ENCODE measurements at regions of chr6 and their contacts with region 1.

Region 1: DNA sequence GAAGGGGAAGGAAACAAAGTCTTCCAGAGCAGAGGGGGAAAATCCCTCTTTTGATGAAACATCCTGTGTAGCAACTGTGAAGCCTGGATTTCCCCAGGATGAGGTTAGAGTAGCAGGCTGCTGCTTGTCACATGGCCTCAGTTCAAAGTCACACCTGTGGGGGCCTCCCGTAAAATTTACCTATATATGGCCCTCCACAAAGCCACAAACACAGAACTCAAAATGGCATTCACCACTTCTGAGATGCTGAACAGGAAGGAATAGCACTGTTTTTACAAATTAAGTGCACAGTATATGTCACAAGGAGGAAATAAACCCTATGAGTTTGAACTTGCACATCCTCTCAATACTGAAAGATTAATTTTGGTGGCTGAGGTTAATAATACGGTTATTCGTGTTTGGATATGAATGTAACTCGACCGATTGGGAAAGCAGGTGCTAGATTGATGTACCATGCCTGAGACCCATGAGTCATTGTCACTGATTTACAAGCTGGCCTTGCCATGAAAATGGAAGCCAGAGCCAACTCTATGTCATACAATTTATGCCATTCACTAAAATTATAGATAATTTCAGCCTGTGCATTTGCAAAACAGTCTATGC is 70.6 kb downstream of the SGK1 start:
- DNase-seq: peak; percentile 46 to 96 (median 58)
- ATAC-seq: peak; percentile 90
- H3K4me3 ChIP-seq: peak overlapping the region; percentile 6
- H3K4me3 Mint-ChIP-seq: peak overlapping the region; percentile 79
- H3K27ac ChIP-seq: peak overlapping the region; percentile 48 to 72
- H3K27ac Mint-ChIP-seq: peak overlapping the region; percentile 86
- H3K4me1 ChIP-seq: peaks cover 47% of the 10 kb centered on the region
- H3K4me1 Mint-ChIP-seq: peaks cover 65% of the 10 kb centered on the region
- H3K27me3 ChIP-seq: no peaks in the 10 kb centered on the region
- H3K27me3 Mint-ChIP-seq: no peaks in the 10 kb centered on the region
- CTCF ChIP-seq: no peak

Region 2: GRCh38 chr6:134201711-134202110 is 45.6 kb before region 1 on chr6:
- CTCF ChIA-PET with region 1: no interaction called
- POLR2A ChIA-PET with region 1: no interaction called
- intact Hi-C with region 1: no loop called
- DNase-seq: no peak
- ATAC-seq: no peak
- H3K4me3 ChIP-seq: no peak overlapping the region
- H3K4me3 Mint-ChIP-seq: no peak overlapping the region
- H3K27ac ChIP-seq: no peak overlapping the region
- H3K27ac Mint-ChIP-seq: no peak overlapping the region
- H3K4me1 ChIP-seq: peaks cover 4% of the 10 kb centered on the region
- H3K4me1 Mint-ChIP-seq: peaks cover 5% of the 10 kb centered on the region
- H3K27me3 ChIP-seq: no peaks in the 10 kb centered on the region
- H3K27me3 Mint-ChIP-seq: no peaks in the 10 kb centered on the region
- CTCF ChIP-seq: no peak

Region 3: DNA sequence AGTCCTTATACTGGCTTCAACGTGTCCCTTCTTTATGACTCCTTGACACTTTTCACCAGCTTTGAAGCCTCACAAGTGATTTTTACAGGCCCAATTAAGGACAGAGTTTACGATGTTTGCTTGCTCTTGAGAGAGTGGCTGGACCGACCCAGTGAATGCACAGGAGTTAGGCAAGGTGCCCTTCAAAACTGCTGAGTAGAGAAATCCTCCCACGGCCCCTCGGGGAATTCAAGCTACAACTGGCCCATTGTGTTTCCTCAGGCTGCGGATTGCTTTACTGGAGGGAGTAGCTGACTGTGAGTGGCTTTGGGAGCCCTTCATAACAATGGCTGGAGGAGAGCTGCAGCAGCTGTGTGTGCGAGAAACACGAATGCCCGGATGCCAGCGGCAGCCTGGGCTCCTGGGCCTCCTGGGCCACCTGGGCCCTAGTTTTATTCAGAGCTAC is 20.6 kb after region 1 on chr6:
- CTCF ChIA-PET with region 1: no interaction called
- POLR2A ChIA-PET with region 1: interaction called, 3 read pairs
- intact Hi-C with region 1: loop called in 1 of 2 experiments (anchors 2 kb)
- DNase-seq: no peak
- ATAC-seq: no peak
- H3K4me3 ChIP-seq: no peak overlapping the region
- H3K4me3 Mint-ChIP-seq: no peak overlapping the region
- H3K27ac ChIP-seq: no peak overlapping the region
- H3K27ac Mint-ChIP-seq: no peak overlapping the region
- H3K4me1 ChIP-seq: peaks cover 15% of the 10 kb centered on the region
- H3K4me1 Mint-ChIP-seq: peaks cover 19% of the 10 kb centered on the region
- H3K27me3 ChIP-seq: no peaks in the 10 kb centered on the region
- H3K27me3 Mint-ChIP-seq: no peaks in the 10 kb centered on the region
- CTCF ChIP-seq: no peak

Region 4: DNA sequence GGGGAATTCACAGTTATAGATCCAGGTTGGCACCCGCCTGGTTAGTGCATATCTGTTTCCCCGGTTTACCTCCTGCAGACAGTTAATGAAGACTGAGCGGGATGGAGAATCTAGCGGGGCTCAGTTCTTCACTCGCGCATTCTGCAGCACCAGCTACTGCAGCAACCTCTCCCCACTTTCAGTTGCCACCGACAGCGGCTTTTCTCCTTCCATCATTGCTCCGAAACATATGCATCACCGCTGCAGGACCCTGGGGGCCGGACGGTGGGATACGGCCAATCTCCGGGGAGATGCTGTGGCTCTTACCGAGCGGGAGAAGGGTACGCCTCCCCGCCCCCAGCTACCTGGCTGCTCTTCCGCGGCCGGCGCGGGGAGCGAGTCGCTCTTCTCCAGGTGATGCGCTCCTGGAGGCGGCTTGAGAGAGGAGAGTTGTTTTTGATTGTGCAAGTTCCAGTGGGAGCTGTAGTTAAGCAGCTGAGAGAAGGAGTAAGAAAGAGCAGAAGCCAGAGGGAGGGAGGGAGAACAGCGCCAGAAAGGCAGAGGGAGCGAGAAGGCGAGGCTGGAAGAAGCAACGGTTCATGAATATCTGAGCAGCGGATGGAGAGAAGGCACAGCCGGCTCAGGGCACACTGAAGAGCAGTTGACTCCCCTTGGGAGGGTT is 70.3 kb after region 1 on chr6 and contains the start of gene SGK1:
- CTCF ChIA-PET with region 1: no interaction called
- POLR2A ChIA-PET with region 1: interaction called, 4 read pairs
- intact Hi-C with region 1: loop called in 1 of 2 experiments (anchors 10 kb)
- DNase-seq: peak in 11 of 14 experiments; percentile 1 to 55 (median 19)
- ATAC-seq: peak; percentile 68
- H3K4me3 ChIP-seq: peak within 1 kb of the TSS; percentile 62
- H3K4me3 Mint-ChIP-seq: peak within 1 kb of the TSS; percentile 85
- H3K27ac ChIP-seq: no peak within 1 kb of the TSS
- H3K27ac Mint-ChIP-seq: no peak within 1 kb of the TSS
- H3K4me1 ChIP-seq: peaks cover 9% of the 10 kb centered on the region
- H3K4me1 Mint-ChIP-seq: peaks cover 22% of the 10 kb centered on the region
- H3K27me3 ChIP-seq: peaks cover 0 to 5% of the 10 kb centered on the region in 2 experiments
- H3K27me3 Mint-ChIP-seq: peaks cover 28% of the 10 kb centered on the region
- CTCF ChIP-seq: no peak
- total RNA-seq, gene SGK1: 117 to 120 TPM

Region 5: GRCh38 chr6:134352786-134353480 is 105.6 kb after region 1 on chr6:
- CTCF ChIA-PET with region 1: no interaction called
- POLR2A ChIA-PET with region 1: interaction called, 3 read pairs
- intact Hi-C with region 1: loop called in 1 of 2 experiments (anchors 10 kb)
- DNase-seq: no peak
- ATAC-seq: no peak
- H3K4me3 ChIP-seq: no peak overlapping the region
- H3K4me3 Mint-ChIP-seq: no peak overlapping the region
- H3K27ac ChIP-seq: no peak overlapping the region
- H3K27ac Mint-ChIP-seq: peak overlapping the region; percentile 84
- H3K4me1 ChIP-seq: peaks cover 12% of the 10 kb centered on the region
- H3K4me1 Mint-ChIP-seq: peaks cover 27% of the 10 kb centered on the region
- H3K27me3 ChIP-seq: no peaks in the 10 kb centered on the region
- H3K27me3 Mint-ChIP-seq: no peaks in the 10 kb centered on the region
- CTCF ChIP-seq: no peak

Region 6: DNA sequence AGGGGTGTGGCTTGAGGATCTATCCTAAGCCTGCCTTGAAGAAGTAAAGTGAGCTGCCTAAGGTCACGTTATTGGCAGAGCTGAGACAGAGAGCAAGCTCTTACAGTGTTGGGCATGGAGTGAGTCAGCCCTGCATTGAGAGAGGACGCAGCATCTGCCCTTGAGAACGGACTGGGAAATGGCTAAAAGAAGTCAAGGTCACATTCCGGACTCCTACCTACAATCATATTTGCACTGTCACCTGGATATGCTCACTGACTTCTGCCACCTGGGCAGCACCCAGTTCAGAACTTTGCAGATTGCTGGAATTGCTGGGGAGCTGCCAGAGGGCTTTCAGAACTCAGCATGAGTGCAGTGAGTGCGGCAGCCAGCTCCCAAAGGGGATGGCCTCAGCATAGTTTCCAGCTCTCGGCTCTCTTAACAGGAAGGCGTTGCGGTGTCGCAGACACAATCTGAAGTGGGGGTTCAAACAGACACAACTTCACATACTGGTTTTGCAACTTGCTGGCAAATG is 269.9 kb after region 1 on chr6:
- CTCF ChIA-PET with region 1: no interaction called
- POLR2A ChIA-PET with region 1: no interaction called
- intact Hi-C with region 1: no loop called
- DNase-seq: no peak
- ATAC-seq: no peak
- H3K4me3 ChIP-seq: no peak overlapping the region
- H3K4me3 Mint-ChIP-seq: no peak overlapping the region
- H3K27ac ChIP-seq: no peak overlapping the region
- H3K27ac Mint-ChIP-seq: peak overlapping the region; percentile 57
- H3K4me1 ChIP-seq: peaks cover 13% of the 10 kb centered on the region
- H3K4me1 Mint-ChIP-seq: peaks cover 32% of the 10 kb centered on the region
- H3K27me3 ChIP-seq: no peaks in the 10 kb centered on the region
- H3K27me3 Mint-ChIP-seq: no peaks in the 10 kb centered on the region
- CTCF ChIP-seq: no peak

Region 7: GRCh38 chr6:134529921-134530320 is 282.6 kb after region 1 on chr6:
- CTCF ChIA-PET with region 1: interaction called, 3 read pairs
- POLR2A ChIA-PET with region 1: no interaction called
- intact Hi-C with region 1: loop called in 1 of 2 experiments (anchors 1 kb)
- DNase-seq: peak in 4 of 14 experiments; percentile 41 to 76 (median 62)
- ATAC-seq: peak; percentile 87
- H3K4me3 ChIP-seq: no peak overlapping the region
- H3K4me3 Mint-ChIP-seq: no peak overlapping the region
- H3K27ac ChIP-seq: no peak overlapping the region
- H3K27ac Mint-ChIP-seq: peak overlapping the region; percentile 71
- H3K4me1 ChIP-seq: peaks cover 10% of the 10 kb centered on the region
- H3K4me1 Mint-ChIP-seq: peaks cover 32% of the 10 kb centered on the region
- H3K27me3 ChIP-seq: no peaks in the 10 kb centered on the region
- H3K27me3 Mint-ChIP-seq: no peaks in the 10 kb centered on the region
- CTCF ChIP-seq: no peak